Activated CD4-positive, alpha-beta memory T cell treated with anti-CD3 and anti-CD28 coated beads for 36 hours (primary cell): ENCODE measurements at regions of chr1 and their contacts with region 1.

Region 1: GRCh38 chr1:226062558-226063223 is at the start of gene H3-3A:
- DNase-seq: peak; percentile 98
- H3K4me3 Mint-ChIP-seq: peak within 1 kb of the TSS; percentile 100
- H3K27ac Mint-ChIP-seq: peak within 1 kb of the TSS; percentile 99
- H3K4me1 Mint-ChIP-seq: peaks cover 42% of the 10 kb centered on the region
- H3K27me3 Mint-ChIP-seq: no peaks in the 10 kb centered on the region
- total RNA-seq, gene H3-3A: 317 to 320 TPM

Region 2: DNA sequence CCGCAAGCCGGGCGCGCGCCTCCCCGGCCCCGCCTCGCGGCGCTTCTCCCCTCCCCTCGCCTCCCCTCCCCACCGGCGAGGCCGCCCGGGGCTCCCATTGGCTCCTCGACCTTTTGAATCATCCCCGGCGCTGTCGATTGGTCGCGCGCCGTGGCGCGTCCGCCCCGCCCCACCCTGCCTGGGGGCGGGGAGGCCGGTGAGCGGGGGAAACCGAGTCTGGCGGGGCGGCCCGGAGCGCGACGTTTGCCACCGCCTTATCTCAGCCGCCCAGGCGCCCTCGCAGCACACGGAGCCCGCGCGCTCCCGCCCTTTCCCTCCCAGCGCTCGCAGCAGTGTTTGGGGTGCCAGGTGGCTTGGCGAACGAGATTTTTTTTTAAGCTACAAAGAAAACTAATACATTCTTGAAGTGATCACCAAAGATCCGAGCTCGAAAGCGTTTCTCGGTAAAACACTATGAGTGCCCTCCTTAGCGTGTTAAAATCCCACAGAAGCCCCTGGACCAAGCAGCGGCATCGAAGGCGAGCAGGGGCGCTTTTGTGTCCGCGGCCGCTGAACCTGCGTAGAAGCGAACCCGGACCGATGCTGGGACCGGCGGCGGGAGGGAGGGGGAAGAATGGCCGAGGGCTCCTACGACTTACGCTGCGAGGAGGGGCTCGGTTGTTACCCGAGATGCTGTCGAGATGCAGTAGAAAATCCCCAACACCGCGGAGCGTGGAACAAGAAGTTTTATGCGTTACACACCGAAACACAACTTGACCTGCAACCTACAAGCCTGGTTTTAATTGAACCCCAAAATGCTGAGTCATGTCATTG is 634.4 kb before region 1 on chr1:
- CTCF ChIA-PET with region 1: no interaction called
- POLR2A ChIA-PET with region 1: no interaction called
- intact Hi-C with region 1: loop called (anchors 5 kb)
- DNase-seq: peak; percentile 95
- H3K4me3 Mint-ChIP-seq: peak overlapping the region; percentile 89
- H3K27ac Mint-ChIP-seq: peak overlapping the region; percentile 97
- H3K4me1 Mint-ChIP-seq: peaks cover 44% of the 10 kb centered on the region
- H3K27me3 Mint-ChIP-seq: no peaks in the 10 kb centered on the region

Region 3: DNA sequence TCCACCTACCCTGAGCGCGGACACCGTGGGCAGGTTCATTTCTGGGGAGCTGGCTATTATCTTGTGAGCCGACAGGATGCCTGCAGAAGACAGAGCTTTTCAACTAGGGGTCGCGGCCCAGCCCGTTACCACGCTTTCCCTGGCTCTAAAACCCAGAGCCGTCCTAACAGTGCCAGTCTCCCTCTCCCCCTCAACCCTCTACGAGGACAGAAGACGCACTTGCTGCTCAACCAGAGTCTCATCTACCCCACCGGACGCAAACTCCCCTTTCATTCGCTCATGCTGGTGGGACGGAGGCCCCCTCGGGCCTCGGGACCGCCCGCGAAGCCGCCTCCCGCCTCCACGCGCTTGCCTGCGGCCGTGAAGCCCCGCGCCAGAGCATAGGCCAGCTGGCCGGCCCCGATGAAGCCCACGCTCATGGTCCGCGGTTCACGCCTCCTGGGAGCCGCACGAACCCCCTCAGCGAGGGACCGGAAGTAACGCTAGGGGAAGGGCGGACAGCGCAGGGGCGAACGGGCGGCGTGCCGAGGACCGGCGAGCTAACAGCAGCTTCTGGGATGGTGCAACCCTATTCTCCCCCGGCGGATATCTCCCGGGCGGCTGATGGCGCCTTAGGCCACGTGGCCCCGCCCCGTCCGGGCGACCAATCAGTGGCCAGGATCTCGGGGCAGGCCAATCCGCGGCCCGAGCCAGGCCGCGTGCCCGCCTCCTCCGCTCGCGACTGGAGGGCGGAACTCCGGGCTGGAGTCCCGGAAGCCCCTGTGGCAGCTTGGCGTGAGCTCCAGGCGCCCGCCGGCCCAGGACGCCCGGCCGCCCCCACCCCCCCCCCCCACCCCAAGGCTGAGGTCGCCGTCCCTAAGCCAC is 138.8 kb before region 1 on chr1 and contains the start of gene PYCR2:
- CTCF ChIA-PET with region 1: no interaction called
- POLR2A ChIA-PET with region 1: no interaction called
- intact Hi-C with region 1: loop called (anchors 10 kb)
- DNase-seq: peak; percentile 97
- H3K4me3 Mint-ChIP-seq: peak within 1 kb of the TSS; percentile 95
- H3K27ac Mint-ChIP-seq: peak within 1 kb of the TSS; percentile 92
- H3K4me1 Mint-ChIP-seq: peaks cover 37% of the 10 kb centered on the region
- H3K27me3 Mint-ChIP-seq: no peaks in the 10 kb centered on the region
- total RNA-seq, gene PYCR2: 127 TPM

Region 4: DNA sequence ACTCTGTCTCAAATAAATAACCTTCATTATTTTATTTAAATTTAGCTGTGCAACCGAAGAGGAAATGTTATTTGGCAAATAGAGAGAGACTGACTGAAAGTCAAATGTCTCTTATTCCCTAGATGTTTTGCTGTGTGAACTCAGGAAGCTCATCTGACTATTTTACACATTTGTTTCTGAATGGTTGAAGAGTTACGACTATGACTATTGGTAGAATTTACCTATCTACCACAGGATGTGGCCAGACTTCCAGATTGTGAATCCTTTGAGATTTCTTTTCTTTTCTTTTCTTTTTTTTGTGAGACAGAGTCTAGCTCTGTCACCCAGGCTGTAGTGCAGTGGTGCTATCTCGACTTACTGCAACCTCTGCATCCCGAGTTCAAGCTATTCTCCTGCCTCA is 58.3 kb before region 1 on chr1:
- CTCF ChIA-PET with region 1: interaction called, 12 read pairs
- POLR2A ChIA-PET with region 1: interaction called, 45 read pairs
- intact Hi-C with region 1: loop called (anchors 1 kb)
- DNase-seq: no peak
- H3K4me3 Mint-ChIP-seq: no peak overlapping the region
- H3K27ac Mint-ChIP-seq: peak overlapping the region; percentile 24
- H3K4me1 Mint-ChIP-seq: peaks cover 39% of the 10 kb centered on the region
- H3K27me3 Mint-ChIP-seq: no peaks in the 10 kb centered on the region

Region 5: DNA sequence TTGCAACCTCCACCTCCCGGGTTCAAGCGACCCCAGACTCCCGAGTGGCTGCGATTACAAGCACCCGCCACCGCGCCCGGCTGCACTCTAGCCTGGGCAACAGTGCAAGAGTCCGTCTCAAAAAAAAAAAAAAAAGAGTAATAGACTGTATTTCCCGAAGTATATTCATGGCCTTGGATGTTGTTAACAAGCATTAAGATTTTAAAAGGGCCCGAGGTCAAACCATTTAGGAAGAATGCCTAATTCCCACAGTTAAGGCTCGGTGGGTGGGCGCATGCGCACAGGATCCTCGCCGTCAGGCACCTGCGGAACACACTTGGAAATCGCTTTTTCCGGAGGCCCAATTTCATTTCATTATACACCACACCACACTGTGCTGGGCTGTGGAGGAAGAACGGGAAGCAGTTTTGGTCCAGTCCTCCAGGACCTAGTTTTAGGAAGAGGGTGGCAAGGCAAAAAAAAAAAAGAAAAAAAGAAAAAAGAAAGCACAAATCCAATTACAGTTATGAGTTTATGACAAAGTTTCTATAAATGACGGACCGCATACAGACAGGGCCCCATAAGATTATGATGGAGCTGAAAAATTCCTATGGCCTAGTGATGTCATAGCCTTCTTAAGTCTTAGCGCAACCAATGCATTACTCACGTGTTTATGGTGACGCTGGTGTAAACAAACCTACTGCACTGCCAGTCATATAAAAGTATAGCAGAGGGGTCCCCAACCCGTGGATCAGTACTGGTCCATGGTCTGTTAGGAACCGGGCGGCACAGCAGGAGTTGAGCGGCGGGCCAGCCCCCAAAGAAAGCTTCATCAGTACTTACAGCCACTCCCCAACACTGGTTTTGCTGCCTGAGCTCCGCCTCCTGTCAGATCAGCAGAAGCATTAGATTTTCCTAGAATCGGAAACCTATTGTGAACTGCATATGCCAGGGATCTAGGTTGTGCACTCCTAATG is 38.0 kb after region 1 on chr1:
- CTCF ChIA-PET with region 1: interaction called, 12 read pairs
- POLR2A ChIA-PET with region 1: interaction called, 3 read pairs
- intact Hi-C with region 1: loop called (anchors 2 kb)
- DNase-seq: peak; percentile 52
- H3K4me3 Mint-ChIP-seq: peak overlapping the region; percentile 76
- H3K27ac Mint-ChIP-seq: no peak overlapping the region
- H3K4me1 Mint-ChIP-seq: peaks cover 17% of the 10 kb centered on the region
- H3K27me3 Mint-ChIP-seq: peaks cover 3% of the 10 kb centered on the region

Region 6: DNA sequence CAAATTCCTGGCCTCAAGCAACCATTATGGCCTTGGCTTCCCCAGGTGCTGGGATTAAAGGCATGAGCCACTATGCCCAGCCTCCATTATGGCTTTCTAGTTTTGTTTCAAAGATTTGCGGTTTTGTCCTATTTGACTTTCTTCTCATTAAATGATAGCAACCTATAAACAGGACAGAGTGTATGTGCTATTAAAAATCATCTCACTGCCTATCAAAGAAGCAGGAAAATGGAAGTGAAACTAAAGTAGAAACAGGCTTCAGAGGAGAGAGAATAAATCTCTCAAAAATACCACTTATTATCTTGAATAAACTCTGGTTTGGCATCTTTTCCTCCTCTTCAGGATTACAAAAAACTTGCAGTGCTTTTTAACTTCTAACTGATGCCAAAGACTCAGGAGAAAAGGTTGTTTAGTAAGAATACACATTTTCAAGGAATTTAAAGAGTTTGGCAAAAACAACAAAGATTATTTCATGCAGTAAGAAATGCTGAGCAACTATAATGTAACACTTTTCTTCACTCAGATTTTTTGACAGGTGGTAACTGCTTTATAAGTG is 95.1 kb after region 1 on chr1:
- CTCF ChIA-PET with region 1: no interaction called
- POLR2A ChIA-PET with region 1: no interaction called
- intact Hi-C with region 1: no loop called
- DNase-seq: no peak
- H3K4me3 Mint-ChIP-seq: no peak overlapping the region
- H3K27ac Mint-ChIP-seq: peak overlapping the region; percentile 8
- H3K4me1 Mint-ChIP-seq: peaks cover 9% of the 10 kb centered on the region
- H3K27me3 Mint-ChIP-seq: no peaks in the 10 kb centered on the region

Region 7: GRCh38 chr1:226186124-226187018 is 123.7 kb after region 1 on chr1 and contains the start of gene ACBD3:
- CTCF ChIA-PET with region 1: no interaction called
- POLR2A ChIA-PET with region 1: interaction called, 4 read pairs
- intact Hi-C with region 1: loop called (anchors 1 kb)
- DNase-seq: peak; percentile 91
- H3K4me3 Mint-ChIP-seq: peak within 1 kb of the TSS; percentile 93
- H3K27ac Mint-ChIP-seq: peak within 1 kb of the TSS; percentile 91
- H3K4me1 Mint-ChIP-seq: peaks cover 34% of the 10 kb centered on the region
- H3K27me3 Mint-ChIP-seq: no peaks in the 10 kb centered on the region
- total RNA-seq, gene ACBD3: 18.7 to 20.7 TPM

Region 8: DNA sequence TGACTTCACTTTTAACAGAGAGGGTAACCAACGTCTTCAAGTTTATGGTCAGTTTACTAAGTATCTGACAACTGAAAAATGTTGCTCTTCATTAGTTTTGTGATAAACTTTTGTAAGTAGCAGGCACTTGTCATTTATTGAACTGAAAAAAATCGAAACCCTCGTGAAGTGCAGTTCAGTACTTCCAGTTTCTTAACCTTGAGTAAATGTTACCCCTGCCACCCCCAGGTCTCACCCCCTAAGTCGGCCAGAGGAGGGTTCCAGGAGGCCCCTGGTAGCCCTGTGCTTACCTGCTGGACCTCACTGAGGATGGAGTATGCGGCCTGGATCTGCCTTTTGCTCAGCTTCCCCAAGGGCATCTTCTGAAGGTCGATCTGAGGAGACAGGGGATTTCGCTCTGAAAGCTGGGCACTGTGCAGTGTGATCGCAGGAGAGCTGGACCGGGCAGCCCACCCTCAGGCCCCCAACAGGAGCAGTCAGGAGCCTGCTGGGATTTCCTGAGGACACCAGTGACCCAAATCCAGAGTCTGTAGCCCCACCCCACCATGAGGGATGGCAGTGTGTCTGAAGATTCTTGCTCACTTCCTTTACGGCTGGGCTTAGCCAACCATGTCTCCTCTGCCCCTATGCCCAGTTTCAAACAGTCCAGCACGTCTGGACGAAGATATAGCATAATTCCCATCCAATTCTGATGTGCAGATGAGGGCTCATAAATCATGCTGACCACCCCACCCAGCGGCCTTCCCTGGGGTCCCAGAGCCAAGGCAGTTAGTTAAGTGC is 307.6 kb after region 1 on chr1:
- CTCF ChIA-PET with region 1: no interaction called
- POLR2A ChIA-PET with region 1: no interaction called
- intact Hi-C with region 1: no loop called
- DNase-seq: no peak
- H3K4me3 Mint-ChIP-seq: no peak overlapping the region
- H3K27ac Mint-ChIP-seq: no peak overlapping the region
- H3K4me1 Mint-ChIP-seq: no peaks in the 10 kb centered on the region
- H3K27me3 Mint-ChIP-seq: no peaks in the 10 kb centered on the region

Region 9: DNA sequence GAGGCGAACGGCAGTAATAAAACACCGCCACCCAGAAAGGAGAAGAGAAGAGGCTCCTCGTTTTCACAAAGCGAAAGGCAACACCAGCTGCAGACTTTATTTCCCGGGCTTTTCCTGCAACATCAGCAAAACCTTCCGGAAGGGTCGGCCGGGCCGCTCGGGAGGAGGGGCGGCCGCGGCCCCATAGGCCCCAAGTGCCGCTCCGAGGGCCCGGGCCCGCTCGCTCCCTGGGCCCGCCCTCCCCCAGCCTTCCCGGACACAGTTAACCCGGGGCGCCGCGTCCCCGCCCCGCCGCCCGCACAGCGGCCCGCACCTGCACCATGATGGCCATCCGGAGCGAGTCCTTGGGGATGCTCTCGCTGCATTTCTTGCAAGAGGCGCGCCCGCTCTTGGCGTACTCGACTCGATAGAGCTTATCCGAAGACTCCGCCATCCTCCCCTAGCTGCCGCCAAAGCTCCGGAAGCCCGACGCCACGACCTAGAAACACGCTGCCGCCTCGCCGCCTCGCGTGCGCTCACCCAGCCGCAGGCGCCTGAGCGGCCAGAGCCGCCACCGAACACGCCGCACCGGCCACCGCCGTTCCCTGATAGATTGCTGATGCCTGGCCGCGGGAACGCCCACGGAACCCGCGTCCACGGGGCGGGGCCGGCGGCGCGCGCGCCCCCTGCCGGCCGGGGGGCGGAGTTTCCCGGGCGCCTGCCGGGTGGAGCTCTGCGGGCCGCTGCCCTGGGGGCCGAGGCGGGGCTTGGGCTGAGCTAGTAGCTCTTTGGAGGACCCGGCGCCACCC is 345.0 kb after region 1 on chr1 and contains the start of gene PARP1:
- CTCF ChIA-PET with region 1: interaction called, 6 read pairs
- POLR2A ChIA-PET with region 1: interaction called, 5 read pairs
- intact Hi-C with region 1: loop called (anchors 2 kb)
- DNase-seq: peak; percentile 93
- H3K4me3 Mint-ChIP-seq: peak within 1 kb of the TSS; percentile 100
- H3K27ac Mint-ChIP-seq: peak within 1 kb of the TSS; percentile 98
- H3K4me1 Mint-ChIP-seq: peaks cover 37% of the 10 kb centered on the region
- H3K27me3 Mint-ChIP-seq: no peaks in the 10 kb centered on the region
- total RNA-seq, gene PARP1: 301 to 308 TPM